ENCODE measurements at regions of chr10 and their contacts with region 1.

Region 1: GRCh38 chr10:51389415-51390321 is 309.7 kb downstream of the CSTF2T start:
- DNase-seq: peak; percentile 56
- ATAC-seq: peak; percentile 73
- H3K4me3 Mint-ChIP-seq: no peak overlapping the region
- H3K27ac Mint-ChIP-seq: no peak overlapping the region
- H3K4me1 Mint-ChIP-seq: no peaks in the 10 kb centered on the region
- H3K27me3 Mint-ChIP-seq: no peaks in the 10 kb centered on the region

Region 2: GRCh38 chr10:51960494-51960895 is 570.8 kb after region 1 on chr10:
- CTCF ChIA-PET with region 1: interaction called, 17 read pairs
- POLR2A ChIA-PET with region 1: no interaction called
- DNase-seq: no peak
- ATAC-seq: no peak
- H3K4me3 Mint-ChIP-seq: no peak overlapping the region
- H3K27ac Mint-ChIP-seq: no peak overlapping the region
- H3K4me1 Mint-ChIP-seq: no peaks in the 10 kb centered on the region
- H3K27me3 Mint-ChIP-seq: peaks cover 8% of the 10 kb centered on the region

Measured in activated CD8-positive, alpha-beta T cell treated with anti-CD3 and anti-CD28 coated beads, Interleukin-2, amount 10 ng/mL, durations not matched to agents 7 days and 5 days (primary cell).